PC-3 (cell line): ENCODE measurements at regions of chrX and their contacts with region 1.

Region 1: GRCh38 chrX:129654419-129655165 is at the start of gene APLN:
- DNase-seq: peak; percentile 45
- ATAC-seq: peak; percentile 72
- H3K4me3 ChIP-seq: peak within 1 kb of the TSS; percentile 84
- H3K27ac ChIP-seq: no peak within 1 kb of the TSS
- H3K4me1 ChIP-seq: peaks cover 24% of the 10 kb centered on the region
- H3K27me3 ChIP-seq: no peaks in the 10 kb centered on the region
- CTCF ChIP-seq: no peak
- total RNA-seq, gene APLN: 8.5 and 11.6 TPM in 2 replicates

Region 2: DNA sequence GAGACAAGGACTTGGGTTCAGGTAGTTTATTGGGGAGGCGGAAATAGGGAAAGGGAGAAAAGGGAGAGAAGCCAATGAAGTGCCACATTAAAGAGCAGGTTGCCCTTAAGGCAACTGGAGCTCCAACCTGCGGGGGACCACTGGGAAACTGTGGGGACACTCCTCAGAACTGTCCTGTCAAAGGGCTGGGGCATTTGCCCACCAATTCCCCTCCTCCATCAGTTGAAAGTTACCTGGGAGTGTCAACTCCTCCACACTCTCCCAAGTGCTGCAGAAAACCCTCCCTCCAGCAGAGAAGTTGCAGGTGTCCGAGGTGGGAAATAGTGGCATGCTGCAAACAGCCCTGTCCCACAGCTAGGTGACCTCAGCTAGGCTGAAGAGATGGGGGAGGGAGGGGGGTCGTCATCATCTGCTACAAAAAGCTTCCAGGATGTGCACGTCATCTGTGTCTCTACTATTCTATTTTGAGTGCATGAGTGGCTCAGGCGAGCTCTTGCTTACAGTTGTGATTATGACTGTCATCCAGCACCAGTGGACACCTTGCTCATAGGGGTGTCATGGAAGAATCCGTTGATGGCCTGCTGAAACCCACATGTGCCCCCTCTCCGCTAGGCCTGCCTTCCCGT is 42.7 kb after region 1 on chrX:
- CTCF ChIA-PET with region 1: no interaction called
- POLR2A ChIA-PET with region 1: no interaction called
- intact Hi-C with region 1: loop called (anchors 5 kb)
- DNase-seq: peak; percentile 23
- ATAC-seq: peak; percentile 24
- H3K4me3 ChIP-seq: no peak overlapping the region
- H3K27ac ChIP-seq: peak overlapping the region; percentile 82
- H3K4me1 ChIP-seq: peaks cover 22% of the 10 kb centered on the region
- H3K27me3 ChIP-seq: no peaks in the 10 kb centered on the region
- CTCF ChIP-seq: no peak

Region 3: DNA sequence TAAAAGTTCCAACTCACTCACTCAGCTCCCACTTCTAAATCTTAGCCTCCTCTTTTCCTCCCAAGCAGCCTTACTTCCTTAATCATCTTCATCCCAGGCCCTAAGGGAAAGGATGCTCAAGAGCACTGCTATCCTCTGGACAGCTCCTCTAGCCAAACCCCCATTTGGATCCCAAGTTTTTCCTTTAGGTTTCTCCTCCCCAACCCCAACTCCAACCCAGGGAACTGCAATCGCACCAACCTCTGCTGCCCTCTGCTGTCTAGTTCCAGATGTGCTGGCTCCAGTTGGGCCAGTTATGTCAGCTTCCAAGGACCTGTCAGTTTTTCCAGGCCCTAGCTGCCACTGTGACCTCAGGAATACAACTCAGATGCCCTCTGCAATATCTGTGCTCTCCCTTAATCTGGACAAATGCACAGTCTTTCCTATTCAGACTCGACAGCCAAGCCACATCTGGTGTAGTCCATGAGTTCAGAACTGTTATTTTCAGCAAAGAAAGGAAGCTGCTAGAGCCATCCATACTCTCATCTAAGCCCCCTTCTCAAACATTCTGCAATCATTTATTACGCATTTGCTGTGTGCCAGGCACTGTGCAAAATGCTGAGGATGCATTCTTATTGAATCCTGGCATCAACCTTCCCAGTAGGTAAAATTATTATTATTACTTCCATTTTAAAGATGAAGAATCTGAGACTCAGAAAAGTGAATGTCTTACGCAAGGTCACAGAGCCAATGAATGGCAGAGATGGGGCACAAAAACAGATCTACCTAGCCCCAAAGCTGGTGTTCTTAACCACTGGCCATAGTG is 71.9 kb after region 1 on chrX:
- CTCF ChIA-PET with region 1: interaction called, 14 read pairs
- POLR2A ChIA-PET with region 1: no interaction called
- intact Hi-C with region 1: loop called (anchors 1 kb)
- DNase-seq: peak; percentile 82
- ATAC-seq: peak; percentile 88
- H3K4me3 ChIP-seq: no peak overlapping the region
- H3K27ac ChIP-seq: no peak overlapping the region
- H3K4me1 ChIP-seq: peaks cover 13% of the 10 kb centered on the region; the same call in 1 of the 2 replicates
- H3K27me3 ChIP-seq: no peaks in the 10 kb centered on the region
- CTCF ChIP-seq: peak; percentile 86

Region 4: GRCh38 chrX:129823115-129823514 is 168.5 kb after region 1 on chrX:
- CTCF ChIA-PET with region 1: no interaction called
- POLR2A ChIA-PET with region 1: no interaction called
- intact Hi-C with region 1: loop called (anchors 1 kb)
- DNase-seq: peak; percentile 61
- ATAC-seq: peak; percentile 68; the same call in 1 of the 2 replicates
- H3K4me3 ChIP-seq: no peak overlapping the region
- H3K27ac ChIP-seq: no peak overlapping the region
- H3K4me1 ChIP-seq: no peaks in the 10 kb centered on the region
- H3K27me3 ChIP-seq: no peaks in the 10 kb centered on the region
- CTCF ChIP-seq: peak; percentile 72